ENCODE measurements at regions of chr16 and their contacts with region 1.

Region 1: GRCh38 chr16:15874745-15875314 is 13.6 kb downstream of the CEP20 start:
- DNase-seq: peak; percentile 68
- H3K4me3 Mint-ChIP-seq: no peak overlapping the region
- H3K27ac Mint-ChIP-seq: no peak overlapping the region
- H3K4me1 Mint-ChIP-seq: peaks cover 11% of the 10 kb centered on the region
- H3K27me3 Mint-ChIP-seq: no peaks in the 10 kb centered on the region

Region 2: DNA sequence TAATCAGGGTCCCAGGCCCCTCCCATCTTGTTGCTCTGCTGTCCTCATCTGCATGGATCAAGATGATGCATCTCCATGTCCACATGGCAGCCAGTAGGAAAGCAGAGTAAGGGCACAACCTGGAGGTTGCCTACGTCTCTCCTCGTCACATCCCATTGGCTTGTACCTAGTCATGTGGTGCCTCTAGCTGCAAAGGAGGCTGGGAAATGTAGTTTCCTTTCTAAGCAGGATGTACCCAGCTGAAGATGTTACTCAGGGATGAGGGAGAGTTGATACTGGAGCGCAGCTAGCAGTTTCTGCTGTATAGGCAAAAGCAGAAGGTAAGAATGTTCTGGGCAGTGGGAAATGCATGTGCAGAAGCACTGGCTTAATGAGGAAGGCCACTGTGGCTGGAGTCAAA is 95.4 kb after region 1 on chr16:
- intact Hi-C with region 1: no loop called
- DNase-seq: no peak
- H3K4me3 Mint-ChIP-seq: no peak overlapping the region
- H3K27ac Mint-ChIP-seq: no peak overlapping the region
- H3K4me1 Mint-ChIP-seq: peaks cover 13% of the 10 kb centered on the region
- H3K27me3 Mint-ChIP-seq: no peaks in the 10 kb centered on the region

Region 3: DNA sequence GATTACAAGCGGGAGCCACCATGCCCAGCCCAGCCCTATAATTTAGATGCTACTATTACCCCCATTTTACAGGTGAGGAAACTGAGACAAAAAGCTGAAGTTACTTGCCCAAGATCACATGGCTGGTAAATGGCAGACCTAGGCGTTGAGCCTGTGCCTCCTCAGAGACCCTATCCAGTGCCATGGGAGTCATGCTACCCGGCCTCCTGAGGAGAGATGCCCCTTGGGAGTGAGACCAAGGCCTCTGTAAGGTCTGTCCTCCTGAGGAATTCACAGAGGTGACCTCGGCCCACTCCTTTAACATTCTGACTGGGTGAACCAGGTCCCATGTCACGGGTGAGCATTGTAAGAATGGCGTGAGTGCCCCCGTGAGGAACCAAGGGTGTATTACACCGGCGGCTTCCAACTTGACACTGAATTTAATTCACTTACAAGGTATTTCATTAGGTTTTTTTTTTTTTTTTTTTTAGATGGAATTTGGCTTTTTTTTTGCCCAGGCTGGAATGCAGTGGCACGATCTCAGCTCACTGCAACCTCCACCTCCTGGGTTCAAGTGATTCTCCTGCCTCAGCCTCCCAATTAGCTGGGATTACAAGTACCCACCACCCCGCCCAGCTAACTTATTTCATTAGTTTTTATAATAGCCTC is 252.8 kb after region 1 on chr16:
- intact Hi-C with region 1: loop called (anchors 1 kb)
- DNase-seq: peak; percentile 91
- H3K4me3 Mint-ChIP-seq: no peak overlapping the region
- H3K27ac Mint-ChIP-seq: peak overlapping the region; percentile 67
- H3K4me1 Mint-ChIP-seq: peaks cover 4% of the 10 kb centered on the region
- H3K27me3 Mint-ChIP-seq: no peaks in the 10 kb centered on the region

Measured in activated CD4-positive, alpha-beta T cell treated with anti-CD3 and anti-CD28 coated beads, Interleukin-2, amount 10 ng/mL, durations not matched to agents 24 days and 14 days (primary cell).